ENCODE measurements at regions of chr21 and their contacts with region 1.

Region 1: DNA sequence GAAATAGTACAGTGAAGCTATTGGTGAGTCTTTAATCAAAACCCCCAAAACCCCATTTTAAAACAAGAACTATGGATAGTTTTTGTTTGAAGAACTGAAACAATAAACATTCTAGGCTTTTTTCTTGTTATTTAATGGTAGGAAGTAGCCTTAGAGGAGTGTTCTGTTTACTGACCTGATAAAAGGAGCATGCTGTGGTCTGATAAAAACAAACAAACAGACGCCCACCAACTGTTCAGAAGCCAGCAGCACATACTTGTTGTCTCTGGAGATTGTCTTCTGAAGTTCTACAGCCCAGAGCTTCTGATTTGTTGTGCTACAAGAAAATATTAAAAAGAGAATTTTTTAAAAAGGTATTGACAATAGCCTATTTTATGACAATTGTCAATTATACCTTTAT is 54.1 kb upstream of the CFAP298 start:
- DNase-seq: no peak
- ATAC-seq: no peak

Region 2: GRCh38 chr21:31088315-31088714 is 1577.9 kb before region 1 on chr21:
- intact Hi-C with region 1: no loop called
- DNase-seq: no peak
- ATAC-seq: no peak

Region 3: GRCh38 chr21:32712043-32712442 is 45.8 kb after region 1 on chr21:
- intact Hi-C with region 1: loop called (anchors 1 kb)
- DNase-seq: no peak
- ATAC-seq: no peak

Region 4: DNA sequence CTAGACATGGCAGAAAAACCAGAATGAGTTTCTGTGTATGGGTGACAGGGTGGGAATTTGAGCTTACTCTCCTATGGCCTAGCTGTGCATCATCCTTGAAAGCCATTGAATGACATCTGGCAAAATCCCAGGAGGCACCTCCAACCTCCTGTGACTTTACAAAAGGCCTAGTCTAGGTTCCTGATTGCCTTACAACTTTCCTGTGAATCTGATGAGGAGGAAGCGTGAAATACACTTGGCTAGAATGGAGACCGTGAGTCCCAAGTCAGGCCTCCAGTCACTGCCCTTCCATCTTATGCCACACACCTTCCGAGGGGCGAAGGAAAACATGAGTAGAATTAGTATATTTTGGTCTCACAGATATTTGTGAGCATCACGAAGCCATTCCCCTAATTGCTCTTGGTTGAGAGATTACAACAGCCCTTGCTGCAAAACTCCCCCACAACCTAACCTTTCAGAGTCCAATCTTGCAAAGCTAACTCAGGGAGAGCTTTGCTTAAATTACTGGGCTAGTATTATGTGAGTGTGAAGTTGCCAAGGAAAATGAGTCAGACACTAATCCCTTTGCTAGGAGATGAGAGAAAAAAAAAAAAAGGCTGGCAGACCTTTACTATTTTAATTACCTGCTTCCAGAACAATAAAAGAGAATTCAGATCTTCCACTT is 141.6 kb after region 1 on chr21:
- intact Hi-C with region 1: no loop called
- DNase-seq: no peak
- ATAC-seq: peak; percentile 86

Measured in sciatic nerve (tissue), 2 donors.